Breast epithelium (tissue), 4 donors: ENCODE measurements at regions of chr19 and their contacts with region 1.

Region 1: GRCh38 chr19:39297654-39298634 is 1.7 kb downstream of the IFNL1 start:
- DNase-seq: no peak
- H3K4me3 ChIP-seq: no peak overlapping the region
- H3K27ac ChIP-seq: no peak overlapping the region
- H3K4me1 ChIP-seq: no peaks in the 10 kb centered on the region
- H3K27me3 ChIP-seq: no peaks in the 10 kb centered on the region
- CTCF ChIP-seq: no peak
- POLR2A ChIP-seq: no peak

Region 2: DNA sequence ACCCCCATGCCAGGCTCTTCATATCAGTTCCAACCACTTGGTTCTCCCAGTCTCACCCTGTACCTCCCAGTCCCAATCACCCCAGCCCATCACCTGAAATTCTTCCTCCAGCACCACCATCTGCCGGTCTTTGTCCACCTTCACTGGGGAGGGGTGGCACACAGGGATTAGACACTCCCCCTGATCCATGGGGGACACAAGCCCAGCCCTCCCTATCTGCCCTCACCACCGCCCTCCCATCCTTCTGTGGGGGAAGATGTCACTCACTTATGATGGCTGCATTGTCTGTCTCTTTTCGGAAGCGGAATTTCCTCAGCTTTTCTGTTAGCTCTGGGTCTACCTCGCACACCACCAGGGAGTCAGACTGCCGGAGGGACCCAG is 37.2 kb after region 1 on chr19:
- intact Hi-C with region 1: no loop called
- DNase-seq: no peak
- H3K4me3 ChIP-seq: peak overlapping the region; percentile 39 to 62 (median 47)
- H3K27ac ChIP-seq: peak overlapping the region; percentile 50 to 86
- H3K4me1 ChIP-seq: no peaks in the 10 kb centered on the region
- H3K27me3 ChIP-seq: no peaks in the 10 kb centered on the region
- CTCF ChIP-seq: no peak
- POLR2A ChIP-seq: no peak

Region 3: GRCh38 chr19:40084948-40085347 is 787.0 kb after region 1 on chr19:
- intact Hi-C with region 1: loop called (anchors 5 kb)
- DNase-seq: no peak
- H3K4me3 ChIP-seq: no peak overlapping the region
- H3K27ac ChIP-seq: no peak overlapping the region
- H3K4me1 ChIP-seq: no peaks in the 10 kb centered on the region
- H3K27me3 ChIP-seq: no peaks in the 10 kb centered on the region
- CTCF ChIP-seq: no peak
- POLR2A ChIP-seq: no peak